GM10248 (cell line): ENCODE measurements at regions of chr6 and their contacts with region 1.

Region 1: GRCh38 chr6:125974214-125974866 is 12.0 kb upstream of the TRMT11 start:
- DNase-seq: peak; percentile 46
- CTCF ChIP-seq: peak; percentile 50

Region 2: GRCh38 chr6:125314019-125314581 is 660.2 kb before region 1 on chr6:
- CTCF ChIA-PET with region 1: interaction called, 13 read pairs
- POLR2A ChIA-PET with region 1: no interaction called
- DNase-seq: peak; percentile 41
- CTCF ChIP-seq: peak; percentile 85

Region 3: GRCh38 chr6:125779924-125780539 is 194.3 kb before region 1 on chr6:
- CTCF ChIA-PET with region 1: interaction called, 17 read pairs
- POLR2A ChIA-PET with region 1: no interaction called
- DNase-seq: peak; percentile 86
- CTCF ChIP-seq: no peak

Region 4: DNA sequence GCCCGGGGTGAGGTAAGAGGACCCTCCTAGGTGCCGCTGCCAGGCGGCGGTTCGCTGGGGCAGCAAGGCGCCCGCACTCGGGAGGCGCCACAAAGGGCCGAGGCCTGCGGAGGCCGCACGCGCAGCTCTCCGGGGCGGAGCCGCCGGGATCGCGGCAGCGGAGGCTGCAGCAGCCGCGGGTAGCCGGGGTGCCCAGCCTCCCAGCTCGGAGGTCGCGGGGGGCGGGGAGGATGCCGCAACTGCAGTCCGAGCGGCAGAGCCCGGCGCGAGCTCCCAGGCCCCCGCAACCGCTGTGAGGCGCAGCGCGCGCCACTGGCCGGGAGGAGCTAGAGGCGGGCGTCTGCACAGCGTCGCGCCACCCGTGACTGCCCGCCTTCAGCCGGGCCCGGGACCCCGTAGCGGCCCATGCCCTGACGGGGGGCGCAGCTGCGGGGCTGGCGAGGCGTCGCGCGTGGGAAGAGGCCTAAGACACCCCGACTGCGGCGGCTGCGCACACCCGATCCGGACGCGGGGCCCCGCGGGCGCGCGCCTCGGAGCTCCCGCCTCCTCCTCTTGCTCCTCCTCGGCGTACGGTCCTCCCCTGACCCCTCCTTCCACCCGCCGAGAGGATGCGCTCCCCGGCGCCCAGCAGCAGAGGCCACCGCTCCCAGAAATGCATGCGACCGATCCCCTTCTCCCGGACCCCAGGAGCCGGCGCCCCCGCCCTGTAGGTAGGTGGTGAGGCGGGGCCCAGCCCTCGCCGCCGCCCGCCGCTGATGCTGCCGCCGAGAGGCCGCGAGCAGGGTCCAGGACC is 183.8 kb before region 1 on chr6 and contains the start of gene NCOA7:
- CTCF ChIA-PET with region 1: interaction called, 30 read pairs
- POLR2A ChIA-PET with region 1: no interaction called
- DNase-seq: peak; percentile 85
- CTCF ChIP-seq: no peak

Region 5: GRCh38 chr6:125858427-125859320 is 115.7 kb before region 1 on chr6:
- CTCF ChIA-PET with region 1: interaction called, 11 read pairs
- POLR2A ChIA-PET with region 1: no interaction called
- DNase-seq: peak; percentile 45
- CTCF ChIP-seq: peak; percentile 62

Region 6: GRCh38 chr6:125986300-125987025 is 12.1 kb after region 1 on chr6 and contains the start of gene TRMT11:
- CTCF ChIA-PET with region 1: interaction called, 31 read pairs
- POLR2A ChIA-PET with region 1: no interaction called
- DNase-seq: peak; percentile 92
- CTCF ChIP-seq: no peak

Region 7: DNA sequence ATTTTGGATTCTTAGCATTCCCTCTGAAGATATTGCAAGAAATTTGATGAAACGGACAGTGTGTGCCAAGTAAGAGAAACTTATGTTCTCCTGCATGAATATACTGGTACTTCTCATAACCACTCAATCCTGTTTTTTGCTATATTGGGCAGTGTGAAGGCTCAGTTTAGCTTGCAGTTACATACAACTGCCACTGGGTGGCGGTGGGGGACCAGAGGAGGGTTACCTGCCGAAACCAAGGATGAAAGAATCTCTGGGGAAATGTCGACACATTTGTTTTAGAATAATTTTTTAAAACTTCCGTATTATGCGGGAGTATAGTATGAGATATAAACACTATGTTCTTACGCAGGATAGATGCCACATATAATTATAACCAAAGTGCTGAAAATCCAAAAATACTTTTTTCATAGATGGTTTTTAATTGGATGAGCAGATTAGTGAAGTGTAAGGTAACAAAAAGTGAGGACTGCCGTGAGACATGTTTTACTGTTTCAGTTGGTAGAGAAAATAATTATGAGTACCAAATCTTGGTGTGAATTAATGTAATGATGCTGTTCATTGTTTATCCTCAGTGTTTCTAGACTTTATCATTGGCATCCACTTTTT is 21.7 kb after region 1 on chr6:
- CTCF ChIA-PET with region 1: interaction called, 28 read pairs
- POLR2A ChIA-PET with region 1: no interaction called
- DNase-seq: peak; percentile 56
- CTCF ChIP-seq: peak; percentile 95